ENCODE measurements at regions of chr2 and their contacts with region 1.

Region 1: GRCh38 chr2:204325468-204325867 is 219.8 kb upstream of the PARD3B start:
- DNase-seq: peak in 4 of 6 donors; percentile 39 to 71 (median 49)
- ATAC-seq: peak; percentile 81 to 98 (median 92)
- H3K4me3 ChIP-seq: no peak overlapping the region
- H3K27ac ChIP-seq: no peak overlapping the region
- H3K4me1 ChIP-seq: no peaks in the 10 kb centered on the region
- H3K27me3 ChIP-seq: no peaks in the 10 kb centered on the region
- CTCF ChIP-seq: peak; percentile 64 to 82 (median 72)

Region 2: GRCh38 chr2:204691911-204692510 is 366.5 kb after region 1 on chr2:
- intact Hi-C with region 1: loop called in 2 of 3 experiments (anchors 5 to 10 kb)
- DNase-seq: peak in 3 of 6 donors; percentile 30 to 71 (median 50)
- ATAC-seq: peak; percentile 97 to 99 (median 99)
- H3K4me3 ChIP-seq: no peak overlapping the region
- H3K27ac ChIP-seq: no peak overlapping the region
- H3K4me1 ChIP-seq: peaks cover 0 to 5% (median 0%) of the 10 kb centered on the region in 3 donors
- H3K27me3 ChIP-seq: no peaks in the 10 kb centered on the region
- CTCF ChIP-seq: peak; percentile 42 to 75 (median 53)

Region 3: GRCh38 chr2:204931562-204931961 is 606.1 kb after region 1 on chr2:
- intact Hi-C with region 1: no loop called
- DNase-seq: no peak
- ATAC-seq: no peak
- H3K4me3 ChIP-seq: no peak overlapping the region
- H3K27ac ChIP-seq: no peak overlapping the region
- H3K4me1 ChIP-seq: no peaks in the 10 kb centered on the region
- H3K27me3 ChIP-seq: no peaks in the 10 kb centered on the region
- CTCF ChIP-seq: no peak

Region 4: DNA sequence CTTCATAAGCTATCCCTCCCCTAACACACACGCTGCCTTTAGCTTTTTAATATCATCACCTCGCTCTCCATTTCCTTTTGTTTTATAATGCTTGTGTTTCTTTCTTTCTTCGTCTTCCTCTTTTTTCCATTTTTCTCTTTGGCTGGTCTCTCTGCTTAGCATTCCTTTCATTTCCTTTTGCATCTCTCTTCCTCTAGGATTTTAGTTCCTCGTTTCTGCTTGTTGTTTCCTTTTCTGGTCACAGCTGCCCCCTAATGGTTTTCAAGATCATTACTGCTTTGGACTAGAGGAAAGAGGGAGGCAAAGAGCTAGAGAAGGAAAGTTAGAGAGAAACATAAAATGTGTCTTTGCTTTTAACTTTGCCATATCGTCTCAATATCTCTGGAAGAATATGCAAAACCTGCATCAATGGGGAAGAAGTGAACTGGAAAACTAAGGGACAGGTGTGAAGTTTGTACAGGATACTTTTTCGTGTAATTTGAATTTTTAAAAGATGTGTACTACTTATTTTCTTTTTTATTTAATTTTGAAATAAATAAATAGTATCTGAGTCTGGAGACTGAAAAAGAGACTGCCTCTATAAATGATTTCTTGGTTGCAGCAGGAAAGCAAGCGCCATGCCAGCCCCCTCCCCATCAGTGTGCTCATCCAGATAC is 1350.5 kb after region 1 on chr2:
- intact Hi-C with region 1: loop called in 1 of 3 experiments (anchors 5 kb)
- DNase-seq: no peak
- ATAC-seq: peak in 3 of 4 donors; percentile 82 to 85 (median 83)
- H3K4me3 ChIP-seq: no peak overlapping the region
- H3K27ac ChIP-seq: no peak overlapping the region
- H3K4me1 ChIP-seq: no peaks in the 10 kb centered on the region
- H3K27me3 ChIP-seq: no peaks in the 10 kb centered on the region
- CTCF ChIP-seq: peak in 3 of 4 donors; percentile 57 to 68 (median 60)

Measured in pancreas (tissue), 10 donors.